PC-9 (cell line): ENCODE measurements at regions of chr11 and their contacts with region 1.

Region 1: GRCh38 chr11:67317205-67317887 is 14.0 kb downstream of the SSH3 start:
- DNase-seq: peak; percentile 96 to 99
- H3K4me3 ChIP-seq: peak overlapping the region; percentile 76
- H3K27ac ChIP-seq: peak overlapping the region; percentile 67
- H3K4me1 ChIP-seq: peaks cover 42% of the 10 kb centered on the region
- H3K27me3 ChIP-seq: no peaks in the 10 kb centered on the region
- CTCF ChIP-seq: peak; percentile 96

Region 2: GRCh38 chr11:66466225-66467027 is 850.9 kb before region 1 on chr11 and contains the start of gene PELI3:
- CTCF ChIA-PET with region 1: interaction called, 10 read pairs
- POLR2A ChIA-PET with region 1: no interaction called
- intact Hi-C with region 1: no loop called
- DNase-seq: peak; percentile 77 to 95
- H3K4me3 ChIP-seq: peak within 1 kb of the TSS; percentile 90
- H3K27ac ChIP-seq: no peak within 1 kb of the TSS
- H3K4me1 ChIP-seq: peaks cover 10% of the 10 kb centered on the region
- H3K27me3 ChIP-seq: no peaks in the 10 kb centered on the region
- CTCF ChIP-seq: no peak
- total RNA-seq, gene PELI3: 14.0 and 18.0 TPM in 2 replicates

Region 3: DNA sequence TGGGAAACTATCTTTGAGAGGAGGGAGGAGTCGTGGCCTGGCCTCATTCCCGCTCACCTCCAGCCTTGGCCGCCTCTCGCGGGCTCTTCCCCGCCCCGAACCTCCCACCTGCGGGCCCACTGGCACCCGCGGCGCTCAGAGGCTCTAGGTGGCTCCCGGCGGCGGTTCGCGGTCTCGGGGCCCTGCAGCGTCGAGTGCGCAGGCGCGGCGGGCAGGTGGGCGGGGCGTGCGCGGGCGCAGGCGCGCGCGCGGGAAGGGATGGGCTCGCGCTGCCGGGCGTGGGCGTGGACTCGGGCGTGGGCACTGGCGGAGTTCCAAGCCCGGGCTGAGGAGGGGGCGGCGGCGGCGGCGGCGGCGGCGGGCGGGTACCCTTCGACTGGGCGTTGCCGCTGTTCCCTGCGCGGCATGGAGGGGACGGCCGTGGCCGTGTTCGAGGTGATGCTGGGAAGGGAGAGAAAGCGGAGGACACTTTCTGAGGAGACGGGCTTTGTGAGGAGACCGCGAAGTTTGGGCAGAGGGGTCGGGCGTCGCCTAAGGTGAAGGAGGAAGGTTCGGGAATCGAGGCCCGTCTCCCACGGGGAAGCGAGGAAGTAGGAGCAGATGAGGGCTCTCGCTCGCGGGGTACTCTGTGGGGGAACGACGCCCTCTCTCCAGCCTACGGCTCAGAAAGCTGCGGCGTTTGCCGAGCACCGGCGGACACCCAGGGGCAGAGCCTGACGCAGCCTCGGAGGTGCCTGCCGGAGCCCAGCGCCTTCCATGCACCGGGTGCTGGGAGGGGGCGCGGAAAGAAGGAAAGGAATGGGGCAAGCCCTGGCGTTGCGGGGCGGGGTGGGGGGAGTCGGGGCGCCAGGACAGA is 572.6 kb before region 1 on chr11:
- CTCF ChIA-PET with region 1: no interaction called
- POLR2A ChIA-PET with region 1: no interaction called
- intact Hi-C with region 1: no loop called
- DNase-seq: peak; percentile 74 to 93
- H3K4me3 ChIP-seq: peak overlapping the region; percentile 99
- H3K27ac ChIP-seq: peak overlapping the region; percentile 79
- H3K4me1 ChIP-seq: peaks cover 41% of the 10 kb centered on the region
- H3K27me3 ChIP-seq: no peaks in the 10 kb centered on the region
- CTCF ChIP-seq: no peak

Region 4: DNA sequence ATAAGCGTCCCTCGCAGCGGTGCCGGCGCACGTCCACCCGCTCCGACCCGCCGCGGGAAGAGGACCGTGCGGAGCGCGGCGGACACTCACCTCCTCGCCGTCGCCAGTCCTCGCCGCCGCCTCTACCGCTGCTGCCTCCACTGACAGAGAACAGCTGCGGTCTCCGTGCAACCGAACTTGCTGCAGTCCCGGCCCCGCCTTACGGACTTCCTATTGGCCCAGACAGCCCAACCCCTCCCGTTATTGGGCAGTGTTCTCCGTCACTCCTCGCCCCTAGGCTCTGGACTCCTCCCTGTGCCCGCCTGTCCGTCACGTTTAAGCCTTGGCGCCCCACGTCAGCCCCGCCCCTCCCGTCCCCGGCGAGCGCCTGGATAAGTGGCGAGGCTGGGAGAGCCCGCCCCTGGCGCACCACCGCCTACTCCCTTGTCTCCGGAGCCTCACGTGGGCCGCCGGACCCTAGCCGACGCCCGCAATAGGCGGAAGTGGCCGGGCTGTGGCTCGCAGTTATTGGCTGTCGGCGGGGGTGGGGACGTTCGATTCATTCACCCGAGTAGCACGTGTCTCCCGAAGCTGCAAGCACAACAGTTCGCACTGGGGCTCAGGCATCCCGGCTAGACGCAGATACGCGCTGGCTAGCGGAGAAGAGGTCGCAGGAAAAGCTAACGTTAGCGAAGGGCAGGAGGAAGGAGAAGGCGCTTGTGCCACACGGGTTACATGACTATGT is 359.0 kb before region 1 on chr11 and contains the start of gene PC:
- CTCF ChIA-PET with region 1: no interaction called
- POLR2A ChIA-PET with region 1: interaction called, 3 read pairs
- intact Hi-C with region 1: loop called (anchors 10 kb)
- DNase-seq: peak; percentile 99 to 100
- H3K4me3 ChIP-seq: peak within 1 kb of the TSS; percentile 63
- H3K27ac ChIP-seq: no peak within 1 kb of the TSS
- H3K4me1 ChIP-seq: peaks cover 22% of the 10 kb centered on the region
- H3K27me3 ChIP-seq: no peaks in the 10 kb centered on the region
- CTCF ChIP-seq: no peak
- total RNA-seq, gene PC: 34.9 and 38.9 TPM in 2 replicates

Region 5: DNA sequence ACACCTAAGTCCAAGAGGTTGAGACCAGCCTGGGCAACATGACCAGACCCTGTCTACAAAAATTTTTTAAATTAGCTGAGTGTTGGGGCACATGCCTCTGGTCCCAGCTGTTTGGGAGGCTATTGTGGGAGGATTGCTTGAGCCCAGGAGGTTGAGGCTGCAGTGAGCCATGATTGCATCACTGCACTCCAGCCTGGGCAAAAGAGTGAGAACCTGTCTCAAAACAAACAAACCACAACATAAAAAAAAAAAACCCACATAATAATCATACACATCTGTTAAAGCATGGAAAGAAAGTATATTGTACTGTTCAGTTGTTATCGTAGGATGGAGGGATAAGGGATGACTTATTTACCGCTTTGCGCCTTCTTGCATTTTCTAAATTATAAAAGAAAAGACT is 86.9 kb before region 1 on chr11:
- CTCF ChIA-PET with region 1: interaction called, 12 read pairs
- POLR2A ChIA-PET with region 1: no interaction called
- intact Hi-C with region 1: no loop called
- DNase-seq: no peak
- H3K4me3 ChIP-seq: no peak overlapping the region
- H3K27ac ChIP-seq: no peak overlapping the region
- H3K4me1 ChIP-seq: no peaks in the 10 kb centered on the region
- H3K27me3 ChIP-seq: no peaks in the 10 kb centered on the region
- CTCF ChIP-seq: no peak

Region 6: DNA sequence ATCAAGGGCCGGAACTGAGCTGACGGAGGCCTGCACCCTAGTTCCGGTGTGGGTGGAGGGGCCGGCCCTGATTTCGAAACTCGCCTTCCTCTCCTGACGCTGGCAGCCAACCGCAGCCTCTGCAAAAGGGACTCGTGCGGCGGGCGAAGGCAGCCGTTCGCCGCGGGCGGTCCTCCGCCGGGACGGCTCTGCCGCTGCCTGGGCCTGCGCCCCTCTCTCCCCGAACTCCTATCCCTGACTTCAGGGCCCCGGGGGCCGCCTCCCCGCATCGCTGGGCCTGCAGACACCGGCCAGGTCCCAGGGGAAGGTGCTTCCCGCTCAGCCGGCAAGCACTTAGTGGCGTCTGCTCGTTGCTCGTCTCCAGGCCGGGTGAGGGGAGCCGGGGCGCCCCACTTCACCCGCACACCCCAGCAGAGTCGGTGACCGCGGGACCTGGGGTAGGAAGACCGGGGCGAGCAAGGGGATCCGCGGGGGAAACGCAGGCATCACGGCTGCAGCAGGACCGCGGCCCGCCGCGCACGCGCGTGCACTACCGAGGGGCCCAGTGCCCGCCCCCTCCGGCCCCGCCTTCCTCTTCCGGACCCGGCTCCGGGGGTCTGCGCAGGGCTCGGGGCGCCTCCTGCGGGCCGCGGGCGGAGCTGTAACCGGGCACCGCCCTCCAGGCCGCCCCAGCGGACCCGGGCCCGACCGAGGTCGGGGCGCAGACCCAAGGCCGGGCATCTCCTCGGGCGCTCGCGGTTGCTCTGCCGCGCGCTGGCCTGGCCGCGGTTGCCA is 28.7 kb before region 1 on chr11:
- CTCF ChIA-PET with region 1: no interaction called
- POLR2A ChIA-PET with region 1: interaction called, 6 read pairs
- intact Hi-C with region 1: loop called (anchors 1 kb)
- DNase-seq: peak; percentile 79 to 92
- H3K4me3 ChIP-seq: peak overlapping the region; percentile 98
- H3K27ac ChIP-seq: peak overlapping the region; percentile 83
- H3K4me1 ChIP-seq: peaks cover 47% of the 10 kb centered on the region
- H3K27me3 ChIP-seq: no peaks in the 10 kb centered on the region
- CTCF ChIP-seq: no peak; the same call in 1 of the 2 replicates

Region 7: GRCh38 chr11:67373925-67374618 is 56.7 kb after region 1 on chr11:
- CTCF ChIA-PET with region 1: no interaction called
- POLR2A ChIA-PET with region 1: interaction called, 3 read pairs
- intact Hi-C with region 1: loop called (anchors 2 kb)
- DNase-seq: peak; percentile 98 to 99
- H3K4me3 ChIP-seq: peak overlapping the region; percentile 87
- H3K27ac ChIP-seq: peak overlapping the region; percentile 99
- H3K4me1 ChIP-seq: peaks cover 59% of the 10 kb centered on the region
- H3K27me3 ChIP-seq: no peaks in the 10 kb centered on the region
- CTCF ChIP-seq: peak; percentile 64

Region 8: GRCh38 chr11:67452141-67452952 is 135.0 kb after region 1 on chr11 and contains the start of gene GPR152:
- CTCF ChIA-PET with region 1: no interaction called
- POLR2A ChIA-PET with region 1: no interaction called
- intact Hi-C with region 1: no loop called
- DNase-seq: no peak
- H3K4me3 ChIP-seq: peak within 1 kb of the TSS; percentile 37; the same call in 1 of the 2 replicates
- H3K27ac ChIP-seq: no peak within 1 kb of the TSS
- H3K4me1 ChIP-seq: no peaks in the 10 kb centered on the region
- H3K27me3 ChIP-seq: no peaks in the 10 kb centered on the region
- CTCF ChIP-seq: no peak
- total RNA-seq, gene GPR152: not detected in 2 replicates

Region 9: DNA sequence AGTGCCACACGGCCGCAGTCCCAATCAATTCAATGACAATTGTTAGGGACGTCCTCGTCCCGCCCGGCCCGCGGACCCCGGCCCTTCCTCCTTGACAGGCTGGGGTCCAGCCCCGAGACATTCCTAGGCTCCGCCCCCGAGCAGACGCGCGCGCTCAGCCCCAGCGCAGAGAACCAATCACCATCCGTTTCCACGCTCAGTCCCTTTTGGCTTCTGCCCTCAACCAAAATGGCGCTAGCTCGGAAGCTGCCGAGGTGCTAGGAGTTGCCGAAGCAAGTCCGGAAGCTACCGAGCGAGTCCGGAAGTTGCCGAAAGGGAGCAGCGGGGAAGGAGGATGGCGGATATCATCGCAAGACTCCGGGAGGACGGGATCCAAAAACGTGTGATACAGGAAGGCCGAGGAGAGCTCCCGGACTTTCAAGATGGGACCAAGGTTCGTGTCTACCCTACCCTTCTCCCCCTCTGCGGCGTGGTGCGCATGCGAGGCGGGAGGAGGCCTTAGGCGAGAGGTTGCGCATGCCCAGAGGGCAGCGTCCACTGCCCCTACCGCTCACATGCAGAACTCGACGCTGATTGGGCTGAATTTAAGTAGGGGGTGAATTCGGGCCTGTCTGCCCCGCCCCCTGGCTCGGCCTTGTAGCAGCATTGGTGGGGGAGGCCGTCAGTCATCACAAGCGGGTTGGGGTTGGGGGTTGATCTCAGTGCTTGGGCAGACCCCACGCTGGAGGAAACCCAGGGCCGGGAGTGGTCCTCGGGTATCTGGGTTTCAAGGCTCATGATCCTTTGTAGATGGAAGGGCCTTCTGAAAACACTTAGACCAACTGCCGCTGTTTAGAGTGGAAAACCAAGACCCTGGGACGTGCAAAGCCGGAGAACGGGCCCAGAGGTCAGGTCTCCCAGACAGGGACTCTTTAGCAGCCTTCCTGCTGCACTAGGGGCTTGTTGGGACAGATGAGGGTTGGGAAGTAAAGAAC is 165.8 kb after region 1 on chr11 and contains the start of gene AIP:
- CTCF ChIA-PET with region 1: interaction called, 22 read pairs
- POLR2A ChIA-PET with region 1: no interaction called
- intact Hi-C with region 1: no loop called
- DNase-seq: peak; percentile 96 to 98
- H3K4me3 ChIP-seq: peak within 1 kb of the TSS; percentile 61
- H3K27ac ChIP-seq: peak within 1 kb of the TSS; percentile 34
- H3K4me1 ChIP-seq: peaks cover 17% of the 10 kb centered on the region
- H3K27me3 ChIP-seq: no peaks in the 10 kb centered on the region
- CTCF ChIP-seq: peak; percentile 34; the same call in 1 of the 2 replicates
- total RNA-seq, gene AIP: 95.3 and 125 TPM in 2 replicates

Region 10: GRCh38 chr11:67606492-67607201 is 289.3 kb after region 1 on chr11 and contains the start of gene NDUFV1:
- CTCF ChIA-PET with region 1: no interaction called
- POLR2A ChIA-PET with region 1: no interaction called
- intact Hi-C with region 1: no loop called
- DNase-seq: peak; percentile 87 to 98
- H3K4me3 ChIP-seq: peak within 1 kb of the TSS; percentile 98
- H3K27ac ChIP-seq: no peak within 1 kb of the TSS
- H3K4me1 ChIP-seq: peaks cover 12% of the 10 kb centered on the region
- H3K27me3 ChIP-seq: 0 out of 2 replicates have a peak, but pooled peaks cover 4% of the 10 kb centered on the region
- CTCF ChIP-seq: peak; percentile 57
- total RNA-seq, gene NDUFV1: 321 and 463 TPM in 2 replicates

Region 11: DNA sequence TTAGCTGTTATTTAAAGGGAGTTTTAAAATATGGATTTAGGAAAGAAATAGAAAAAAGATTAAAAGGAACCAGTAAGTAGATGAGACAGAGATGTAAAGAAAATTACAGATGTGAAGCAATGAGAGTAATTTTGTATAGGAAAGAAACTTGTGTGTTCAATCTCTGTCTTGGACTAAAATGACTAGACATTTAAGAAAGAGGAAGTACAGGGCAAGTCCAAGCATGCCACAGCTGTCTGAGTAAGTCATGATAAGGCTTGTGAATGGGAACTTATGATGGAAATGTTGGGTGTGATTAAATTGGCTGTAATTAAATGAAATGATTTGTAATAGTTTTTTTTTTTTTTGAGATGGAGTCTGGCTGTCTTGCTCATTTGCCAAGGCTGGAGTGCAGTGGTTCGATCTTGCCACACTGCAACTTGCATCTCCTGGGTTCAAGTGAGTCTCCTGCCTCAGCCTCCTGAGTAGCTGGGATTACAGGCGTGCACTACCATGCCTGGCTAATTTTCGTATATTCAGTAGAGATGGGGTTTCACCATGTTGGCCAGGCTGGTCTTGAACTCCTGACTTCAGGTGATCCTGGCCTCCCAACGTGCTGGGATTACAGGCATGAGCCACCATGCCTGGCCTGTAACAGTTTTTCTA is 339.1 kb after region 1 on chr11:
- CTCF ChIA-PET with region 1: no interaction called
- POLR2A ChIA-PET with region 1: no interaction called
- intact Hi-C with region 1: no loop called
- DNase-seq: no peak
- H3K4me3 ChIP-seq: no peak overlapping the region
- H3K27ac ChIP-seq: no peak overlapping the region
- H3K4me1 ChIP-seq: no peaks in the 10 kb centered on the region
- H3K27me3 ChIP-seq: no peaks in the 10 kb centered on the region
- CTCF ChIP-seq: no peak